GM23248 (cell line): ENCODE measurements at regions of chr12 and their contacts with region 1.

Region 1: DNA sequence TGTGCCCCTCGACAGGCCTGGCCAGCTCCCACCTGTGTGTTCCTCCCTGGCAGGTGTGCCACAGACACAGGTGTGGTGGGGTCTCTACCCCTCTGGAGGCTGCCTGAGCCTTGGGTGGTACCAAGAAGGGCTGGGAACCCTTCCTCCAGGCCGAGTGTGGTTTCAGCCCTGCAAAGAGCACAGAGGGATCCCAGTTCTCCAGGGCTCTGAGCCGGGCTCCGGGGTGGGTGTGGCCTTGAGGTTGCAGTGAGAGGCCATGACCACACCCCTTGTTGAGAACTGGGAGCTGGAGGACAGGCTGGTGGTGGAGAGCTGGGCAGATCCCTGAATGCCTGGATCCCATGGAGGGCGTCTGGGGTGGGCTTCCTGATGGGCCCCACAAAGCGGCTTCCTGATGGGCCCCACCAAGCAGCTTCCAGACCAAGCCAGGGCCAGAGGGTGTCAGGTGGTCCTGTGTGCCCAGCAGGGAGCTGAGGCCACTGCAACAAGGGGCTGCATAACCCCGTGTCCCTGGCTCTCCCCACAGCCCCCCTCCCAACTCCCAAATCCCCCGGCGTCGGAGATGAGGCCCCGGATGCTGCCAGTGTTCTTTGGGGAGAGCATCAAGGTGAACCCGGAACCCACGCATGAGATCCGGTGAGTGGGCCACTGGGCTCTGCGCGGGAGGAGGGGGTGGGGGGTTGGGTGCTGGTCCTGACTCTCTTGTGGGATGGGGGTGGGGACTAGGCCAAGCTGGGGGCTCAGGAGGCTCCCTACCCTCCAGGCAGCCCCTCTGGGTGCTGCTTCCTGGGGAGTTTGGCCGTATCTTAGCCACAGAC is 16.6 kb downstream of the RFLNA start:
- DNase-seq: no peak
- H3K4me3 ChIP-seq: no peak overlapping the region
- H3K27ac ChIP-seq: no peak overlapping the region
- H3K4me1 ChIP-seq: no peaks in the 10 kb centered on the region
- H3K27me3 ChIP-seq: no peaks in the 10 kb centered on the region

Region 2: GRCh38 chr12:124036674-124037109 is 274.8 kb before region 1 on chr12:
- in situ Hi-C with region 1: no loop called
- DNase-seq: peak; percentile 68
- H3K4me3 ChIP-seq: no peak overlapping the region
- H3K27ac ChIP-seq: no peak overlapping the region
- H3K4me1 ChIP-seq: peaks cover 13% of the 10 kb centered on the region
- H3K27me3 ChIP-seq: no peaks in the 10 kb centered on the region

Region 3: DNA sequence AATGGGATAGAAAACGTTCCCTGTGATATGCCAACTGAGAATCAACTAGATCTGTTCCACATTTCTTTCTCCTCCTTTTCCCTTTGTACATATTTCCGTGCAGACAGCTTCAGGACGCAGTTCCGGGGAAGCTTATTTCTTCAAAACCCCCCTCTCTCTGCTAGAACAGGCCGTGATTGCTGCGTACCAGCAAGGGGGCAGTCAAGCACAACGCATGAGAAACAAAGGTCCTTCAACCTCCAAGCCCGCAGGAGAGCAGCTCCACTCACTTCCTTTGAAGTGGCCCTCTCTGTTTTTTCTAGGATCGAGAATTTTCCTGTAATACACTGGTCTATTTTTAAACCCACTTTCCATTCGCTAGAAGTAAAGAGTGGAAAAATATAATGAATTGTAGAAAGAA is 257.6 kb before region 1 on chr12:
- in situ Hi-C with region 1: loop called (anchors 5 kb)
- DNase-seq: peak; percentile 71
- H3K4me3 ChIP-seq: no peak overlapping the region
- H3K27ac ChIP-seq: no peak overlapping the region
- H3K4me1 ChIP-seq: 0 out of 2 replicates have a peak, but pooled peaks cover 3% of the 10 kb centered on the region
- H3K27me3 ChIP-seq: no peaks in the 10 kb centered on the region